PC-9 (cell line): ENCODE measurements at regions of chr17 and their contacts with region 1.

Region 1: DNA sequence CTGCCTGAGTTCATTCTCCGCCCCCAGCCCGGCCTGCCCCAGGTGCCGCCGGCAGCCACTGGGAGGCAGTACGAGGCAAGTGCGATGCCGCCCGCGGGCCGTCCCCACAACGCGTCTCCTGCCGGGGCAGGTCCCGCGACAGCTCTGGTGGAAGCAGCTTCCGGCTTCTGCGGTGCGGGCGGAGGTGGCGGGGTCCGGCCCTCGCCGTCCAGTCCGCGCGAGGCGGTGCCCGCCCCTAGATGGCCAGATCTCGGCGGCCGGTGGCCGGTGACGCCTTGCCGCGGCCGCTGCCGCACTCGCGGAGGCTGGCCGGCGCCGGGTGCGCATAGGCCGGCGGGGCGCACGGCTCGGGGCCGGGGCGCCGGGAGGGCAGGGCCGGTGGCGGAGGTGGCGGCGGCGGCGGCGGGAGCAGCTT is 1.8 kb downstream of the GJD3 start:
- DNase-seq: peak; percentile 72 to 82
- H3K4me3 ChIP-seq: peak overlapping the region; percentile 69; the same call in 1 of the 2 replicates
- H3K27ac ChIP-seq: no peak overlapping the region
- H3K4me1 ChIP-seq: peaks cover 8% of the 10 kb centered on the region
- H3K27me3 ChIP-seq: no peaks in the 10 kb centered on the region
- CTCF ChIP-seq: peak; percentile 70

Region 2: GRCh38 chr17:40005520-40005919 is 357.2 kb before region 1 on chr17:
- CTCF ChIA-PET with region 1: no interaction called
- POLR2A ChIA-PET with region 1: no interaction called
- intact Hi-C with region 1: no loop called
- DNase-seq: no peak
- H3K4me3 ChIP-seq: no peak overlapping the region
- H3K27ac ChIP-seq: no peak overlapping the region
- H3K4me1 ChIP-seq: peaks cover 5% of the 10 kb centered on the region
- H3K27me3 ChIP-seq: no peaks in the 10 kb centered on the region
- CTCF ChIP-seq: no peak

Region 3: GRCh38 chr17:40209404-40210093 is 153.2 kb before region 1 on chr17:
- CTCF ChIA-PET with region 1: no interaction called
- POLR2A ChIA-PET with region 1: no interaction called
- intact Hi-C with region 1: loop called (anchors 10 kb)
- DNase-seq: no peak
- H3K4me3 ChIP-seq: no peak overlapping the region
- H3K27ac ChIP-seq: no peak overlapping the region
- H3K4me1 ChIP-seq: no peaks in the 10 kb centered on the region
- H3K27me3 ChIP-seq: no peaks in the 10 kb centered on the region
- CTCF ChIP-seq: no peak

Region 4: GRCh38 chr17:40551879-40552768 is 189.4 kb after region 1 on chr17:
- CTCF ChIA-PET with region 1: interaction called, 12 read pairs
- POLR2A ChIA-PET with region 1: no interaction called
- intact Hi-C with region 1: no loop called
- DNase-seq: no peak
- H3K4me3 ChIP-seq: no peak overlapping the region
- H3K27ac ChIP-seq: peak overlapping the region; percentile 40
- H3K4me1 ChIP-seq: peaks cover 51% of the 10 kb centered on the region
- H3K27me3 ChIP-seq: no peaks in the 10 kb centered on the region
- CTCF ChIP-seq: no peak

Region 5: GRCh38 chr17:40615295-40615988 is 252.7 kb after region 1 on chr17:
- CTCF ChIA-PET with region 1: no interaction called
- POLR2A ChIA-PET with region 1: no interaction called
- intact Hi-C with region 1: loop called (anchors 5 kb)
- DNase-seq: peak; percentile 72
- H3K4me3 ChIP-seq: no peak overlapping the region
- H3K27ac ChIP-seq: no peak overlapping the region
- H3K4me1 ChIP-seq: peaks cover 10% of the 10 kb centered on the region
- H3K27me3 ChIP-seq: no peaks in the 10 kb centered on the region
- CTCF ChIP-seq: peak; percentile 73

Region 6: DNA sequence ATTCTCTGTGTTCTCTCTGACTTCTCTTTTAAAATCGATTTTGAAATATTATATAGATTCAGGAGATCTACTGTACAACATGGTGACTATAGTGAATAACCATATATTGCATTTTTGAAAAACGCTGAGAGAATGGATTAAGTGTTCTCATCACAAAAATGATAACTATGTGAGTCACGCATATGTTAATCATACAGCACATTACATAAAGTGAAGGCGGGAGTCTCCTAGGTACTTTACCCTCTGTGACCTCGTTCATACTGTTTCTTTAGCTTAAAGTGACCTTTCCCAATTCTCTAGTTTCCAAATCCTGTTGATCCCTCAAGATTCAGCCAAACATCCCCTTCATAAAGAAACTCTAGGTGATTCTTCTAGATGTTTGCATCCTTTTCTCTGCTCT is 640.1 kb after region 1 on chr17:
- CTCF ChIA-PET with region 1: no interaction called
- POLR2A ChIA-PET with region 1: no interaction called
- intact Hi-C with region 1: no loop called
- DNase-seq: no peak
- H3K4me3 ChIP-seq: no peak overlapping the region
- H3K27ac ChIP-seq: 0 out of 2 replicates have a peak overlapping the region, but pooled peaks have one; percentile 21
- H3K4me1 ChIP-seq: peaks cover 12% of the 10 kb centered on the region
- H3K27me3 ChIP-seq: no peaks in the 10 kb centered on the region
- CTCF ChIP-seq: no peak

Region 7: DNA sequence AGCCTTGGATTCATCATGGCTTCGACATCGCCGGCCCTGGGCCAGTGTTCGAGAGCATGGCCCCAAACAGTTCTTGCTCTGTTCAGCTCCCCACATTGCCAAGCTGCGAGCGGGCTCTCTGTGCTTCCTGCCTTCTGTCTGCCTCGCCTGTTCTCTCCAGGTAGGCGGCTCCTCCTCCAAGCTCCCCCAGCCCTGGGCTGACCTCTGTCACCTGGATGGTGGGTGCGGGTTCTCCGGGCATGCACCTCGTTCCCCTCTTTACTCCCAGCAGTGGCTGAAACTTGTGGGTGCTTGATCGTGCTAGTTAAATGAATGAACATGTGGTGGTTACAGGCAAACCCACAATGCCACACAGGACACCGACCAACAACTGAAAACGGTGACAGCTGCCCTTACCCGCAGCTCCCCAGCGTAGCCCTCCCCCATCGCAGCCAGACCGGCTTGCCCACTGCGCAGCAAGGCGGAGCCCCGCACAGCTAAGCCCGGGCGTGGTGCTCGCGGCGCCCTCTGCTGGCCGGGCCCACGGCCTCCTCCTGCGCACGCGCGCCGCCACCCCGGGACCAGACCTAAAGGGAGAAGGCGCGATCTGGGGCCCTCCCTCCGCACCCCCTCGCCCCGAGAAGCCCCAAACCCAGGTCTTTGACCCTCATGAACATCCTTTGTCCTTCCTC is 1303.0 kb after region 1 on chr17:
- CTCF ChIA-PET with region 1: no interaction called
- POLR2A ChIA-PET with region 1: interaction called, 4 read pairs
- intact Hi-C with region 1: loop called (anchors 10 kb)
- DNase-seq: peak; percentile 75 to 90
- H3K4me3 ChIP-seq: peak overlapping the region; percentile 46; the same call in 1 of the 2 replicates
- H3K27ac ChIP-seq: peak overlapping the region; percentile 29; the same call in 1 of the 2 replicates
- H3K4me1 ChIP-seq: peaks cover 26% of the 10 kb centered on the region
- H3K27me3 ChIP-seq: no peaks in the 10 kb centered on the region
- CTCF ChIP-seq: peak; percentile 91